ENCODE measurements at regions of chr12 and their contacts with region 1.

Region 1: DNA sequence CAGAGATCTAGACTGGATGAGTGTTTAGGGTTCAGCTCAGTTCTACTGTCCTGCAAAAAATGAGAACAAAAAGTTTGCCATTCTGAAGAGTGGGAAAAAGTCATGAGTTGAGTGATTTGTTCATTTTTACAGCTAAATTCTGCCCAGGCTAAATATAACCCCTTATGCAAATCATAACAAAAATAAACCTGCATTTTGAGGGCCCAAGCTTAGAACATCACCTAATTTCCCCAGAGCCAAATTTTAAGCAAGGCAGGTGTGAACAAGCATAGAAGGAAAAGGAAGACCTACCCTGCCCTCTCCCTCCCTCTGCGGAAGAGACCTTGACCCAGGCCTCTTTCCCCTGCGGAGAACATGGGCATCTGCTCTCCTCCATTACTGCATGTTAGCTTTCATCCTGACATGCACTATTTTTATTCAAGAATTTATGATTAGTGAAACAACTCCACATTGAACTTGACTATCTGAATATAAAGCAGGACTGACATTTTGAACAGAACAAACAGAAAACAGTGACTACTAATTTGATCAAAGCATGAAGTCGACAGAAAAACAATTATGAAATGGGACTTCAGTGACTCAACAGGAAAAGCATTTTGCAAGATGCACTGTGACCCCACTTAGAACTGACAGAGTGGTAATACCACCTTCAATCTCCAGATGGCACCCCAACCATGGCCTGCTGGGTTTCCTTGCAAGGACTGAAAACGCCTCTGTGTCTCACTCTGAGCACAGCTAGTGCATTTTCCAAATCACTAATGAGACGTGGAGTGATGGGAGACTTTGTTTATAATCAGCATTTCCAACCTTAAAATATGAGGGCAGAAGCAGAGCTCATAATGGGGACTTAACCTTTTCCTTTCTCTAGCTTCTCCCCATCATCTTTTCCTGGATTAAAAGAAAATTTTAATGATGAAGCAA is 30.9 kb upstream of the SELPLG start:
- DNase-seq: peak; percentile 35 to 83 (median 78)
- ATAC-seq: peak; percentile 97
- H3K4me3 ChIP-seq: no peak overlapping the region
- H3K4me3 Mint-ChIP-seq: peak overlapping the region in 1 of 10 donors; percentile 24
- H3K27ac ChIP-seq: no peak overlapping the region
- H3K27ac Mint-ChIP-seq: peak overlapping the region in 8 of 9 donors; percentile 8 to 84 (median 75)
- H3K4me1 ChIP-seq: peaks cover 0 to 3% of the 10 kb centered on the region in 2 donors
- H3K4me1 Mint-ChIP-seq: peaks cover 5 to 17% (median 12%) of the 10 kb centered on the region in 7 donors
- H3K27me3 ChIP-seq: no peaks in the 10 kb centered on the region
- H3K27me3 Mint-ChIP-seq: no peaks in the 10 kb centered on the region

Region 2: GRCh38 chr12:108253540-108253939 is 411.1 kb before region 1 on chr12:
- CTCF ChIA-PET with region 1: no interaction called
- POLR2A ChIA-PET with region 1: no interaction called
- intact Hi-C with region 1: no loop called
- DNase-seq: no peak
- ATAC-seq: no peak
- H3K4me3 ChIP-seq: no peak overlapping the region
- H3K4me3 Mint-ChIP-seq: no peak overlapping the region
- H3K27ac ChIP-seq: no peak overlapping the region
- H3K27ac Mint-ChIP-seq: no peak overlapping the region
- H3K4me1 ChIP-seq: no peaks in the 10 kb centered on the region
- H3K4me1 Mint-ChIP-seq: peaks cover 0 to 3% (median 0%) of the 10 kb centered on the region in 7 donors
- H3K27me3 ChIP-seq: no peaks in the 10 kb centered on the region
- H3K27me3 Mint-ChIP-seq: peaks cover 0 to 61% (median 37%) of the 10 kb centered on the region in 5 donors

Region 3: GRCh38 chr12:108618079-108618952 is 46.3 kb before region 1 on chr12:
- CTCF ChIA-PET with region 1: interaction called, 34 read pairs
- POLR2A ChIA-PET with region 1: interaction called, 9 read pairs
- intact Hi-C with region 1: loop called (anchors 1 to 5 kb)
- DNase-seq: peak; percentile 61 to 81 (median 74)
- ATAC-seq: peak; percentile 72
- H3K4me3 ChIP-seq: no peak overlapping the region
- H3K4me3 Mint-ChIP-seq: peak overlapping the region in 8 of 10 donors; percentile 13 to 54 (median 34)
- H3K27ac ChIP-seq: peak overlapping the region; percentile 65
- H3K27ac Mint-ChIP-seq: peak overlapping the region; percentile 67 to 92 (median 79)
- H3K4me1 ChIP-seq: peaks cover 34 to 42% of the 10 kb centered on the region in 2 donors
- H3K4me1 Mint-ChIP-seq: peaks cover 44 to 72% (median 64%) of the 10 kb centered on the region in 7 donors
- H3K27me3 ChIP-seq: no peaks in the 10 kb centered on the region
- H3K27me3 Mint-ChIP-seq: no peaks in the 10 kb centered on the region

Region 4: DNA sequence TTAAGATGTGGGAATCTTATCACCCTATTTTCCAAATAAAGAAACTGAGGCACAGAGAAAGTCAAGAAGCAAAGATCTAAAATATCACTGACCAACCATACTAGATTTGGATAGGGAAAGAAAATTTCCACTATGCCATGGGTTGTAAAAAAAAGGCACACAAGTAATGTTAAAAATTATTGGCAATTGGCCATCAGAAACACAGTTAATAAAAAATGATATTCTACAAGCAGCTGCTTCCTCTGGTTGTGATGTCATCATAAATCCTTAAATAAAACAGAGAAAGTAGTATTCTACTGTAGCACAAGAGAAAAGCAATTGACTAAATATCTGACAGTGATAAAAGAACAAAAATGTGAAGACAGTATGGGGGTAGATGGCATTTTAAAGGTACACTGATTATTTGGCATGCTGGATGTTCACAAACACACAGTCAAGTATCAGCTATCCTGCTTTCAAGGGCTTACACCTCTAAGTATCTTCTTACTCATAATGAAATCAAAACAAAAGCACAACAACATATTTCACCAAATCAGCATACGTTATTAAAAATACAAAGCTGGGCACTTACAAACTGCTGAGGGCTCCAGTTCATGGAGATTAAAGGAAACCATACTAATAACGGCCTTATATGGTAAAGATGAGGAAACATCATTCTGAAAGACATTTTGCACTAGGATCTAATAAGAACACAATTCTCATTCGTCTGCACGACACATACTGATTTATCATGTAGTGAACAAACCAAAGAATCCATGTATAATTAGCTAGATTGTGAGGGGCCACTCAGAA is 21.1 kb after region 1 on chr12:
- CTCF ChIA-PET with region 1: interaction called, 10 read pairs
- POLR2A ChIA-PET with region 1: no interaction called
- intact Hi-C with region 1: loop called (anchors 2 kb)
- DNase-seq: no peak
- ATAC-seq: no peak
- H3K4me3 ChIP-seq: no peak overlapping the region
- H3K4me3 Mint-ChIP-seq: no peak overlapping the region
- H3K27ac ChIP-seq: no peak overlapping the region
- H3K27ac Mint-ChIP-seq: no peak overlapping the region
- H3K4me1 ChIP-seq: peaks cover 13 to 16% of the 10 kb centered on the region in 2 donors
- H3K4me1 Mint-ChIP-seq: peaks cover 20 to 35% (median 23%) of the 10 kb centered on the region in 7 donors
- H3K27me3 ChIP-seq: no peaks in the 10 kb centered on the region
- H3K27me3 Mint-ChIP-seq: no peaks in the 10 kb centered on the region

Region 5: GRCh38 chr12:108803428-108804105 is 139.0 kb after region 1 on chr12:
- CTCF ChIA-PET with region 1: interaction called, 145 read pairs
- POLR2A ChIA-PET with region 1: interaction called, 16 read pairs
- intact Hi-C with region 1: loop called (anchors 1 kb)
- DNase-seq: peak; percentile 25 to 78 (median 70)
- ATAC-seq: peak; percentile 93
- H3K4me3 ChIP-seq: no peak overlapping the region
- H3K4me3 Mint-ChIP-seq: no peak overlapping the region
- H3K27ac ChIP-seq: no peak overlapping the region
- H3K27ac Mint-ChIP-seq: peak overlapping the region in 3 of 9 donors; percentile 37 to 62 (median 48)
- H3K4me1 ChIP-seq: peaks cover 0 to 3% of the 10 kb centered on the region in 2 donors
- H3K4me1 Mint-ChIP-seq: peaks cover 0 to 10% (median 3%) of the 10 kb centered on the region in 7 donors
- H3K27me3 ChIP-seq: no peaks in the 10 kb centered on the region
- H3K27me3 Mint-ChIP-seq: no peaks in the 10 kb centered on the region

Region 6: DNA sequence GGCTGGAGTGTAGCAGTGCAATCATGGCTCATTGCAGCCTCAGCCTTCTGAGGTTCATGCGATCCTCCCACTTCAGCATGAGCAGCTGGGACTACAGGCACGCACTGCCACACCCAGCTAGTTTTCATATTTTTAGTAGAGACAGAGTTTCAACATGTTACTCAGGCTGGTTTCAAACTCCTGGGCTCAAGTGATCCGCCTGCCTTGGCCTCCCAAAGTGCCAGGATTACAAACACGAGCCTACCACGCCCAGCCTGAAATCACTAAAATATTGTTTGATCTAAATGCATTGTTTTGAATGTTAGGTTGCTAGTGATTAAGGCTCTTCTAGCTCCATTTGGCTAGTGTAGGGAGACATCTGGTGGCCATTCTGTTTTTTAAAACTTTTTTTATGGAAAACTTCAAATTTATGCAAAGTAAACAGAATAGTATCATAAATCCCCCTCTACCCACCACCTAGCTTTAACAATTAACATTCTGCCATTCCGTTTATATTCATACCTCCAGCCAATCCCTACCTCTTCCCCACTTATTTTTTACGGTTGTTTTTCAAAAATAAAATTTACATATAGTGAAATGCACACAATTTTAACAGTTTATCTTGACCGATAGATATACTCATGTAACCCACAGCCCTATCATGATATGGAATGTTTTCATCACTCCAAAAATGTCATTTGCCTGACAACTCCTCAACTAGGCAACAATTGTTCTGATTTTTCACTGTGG is 720.9 kb after region 1 on chr12:
- CTCF ChIA-PET with region 1: no interaction called
- POLR2A ChIA-PET with region 1: no interaction called
- intact Hi-C with region 1: loop called in 1 of 2 experiments (anchors 10 kb)
- DNase-seq: peak in 5 of 9 donors; percentile 2 to 28 (median 22)
- ATAC-seq: peak; percentile 32
- H3K4me3 ChIP-seq: no peak overlapping the region
- H3K4me3 Mint-ChIP-seq: no peak overlapping the region
- H3K27ac ChIP-seq: no peak overlapping the region
- H3K27ac Mint-ChIP-seq: no peak overlapping the region
- H3K4me1 ChIP-seq: no peaks in the 10 kb centered on the region
- H3K4me1 Mint-ChIP-seq: no peaks in the 10 kb centered on the region
- H3K27me3 ChIP-seq: no peaks in the 10 kb centered on the region
- H3K27me3 Mint-ChIP-seq: peaks cover 27 to 45% (median 40%) of the 10 kb centered on the region in 5 donors

Measured in naive thymus-derived CD4-positive, alpha-beta T cell (primary cell).